CD4-positive, alpha-beta T cell (primary cell): ENCODE measurements at regions of chr15 and their contacts with region 1.

Region 1: GRCh38 chr15:89888214-89888804 is 5.5 kb downstream of the AP3S2 start:
- DNase-seq: no peak
- ATAC-seq: no peak
- H3K4me3 ChIP-seq: no peak overlapping the region
- H3K4me3 Mint-ChIP-seq: no peak overlapping the region
- H3K27ac ChIP-seq: no peak overlapping the region
- H3K27ac Mint-ChIP-seq: no peak overlapping the region
- H3K4me1 ChIP-seq: peaks cover 19% of the 10 kb centered on the region
- H3K4me1 Mint-ChIP-seq: peaks cover 31% of the 10 kb centered on the region
- H3K27me3 ChIP-seq: no peaks in the 10 kb centered on the region
- H3K27me3 Mint-ChIP-seq: no peaks in the 10 kb centered on the region
- CTCF ChIP-seq: no peak

Region 2: GRCh38 chr15:89768060-89768500 is 120.2 kb before region 1 on chr15:
- CTCF ChIA-PET with region 1: no interaction called
- POLR2A ChIA-PET with region 1: no interaction called
- intact Hi-C with region 1: no loop called
- DNase-seq: no peak
- ATAC-seq: no peak
- H3K4me3 ChIP-seq: no peak overlapping the region
- H3K4me3 Mint-ChIP-seq: no peak overlapping the region
- H3K27ac ChIP-seq: no peak overlapping the region
- H3K27ac Mint-ChIP-seq: no peak overlapping the region
- H3K4me1 ChIP-seq: no peaks in the 10 kb centered on the region
- H3K4me1 Mint-ChIP-seq: no peaks in the 10 kb centered on the region
- H3K27me3 ChIP-seq: no peaks in the 10 kb centered on the region
- H3K27me3 Mint-ChIP-seq: no peaks in the 10 kb centered on the region
- CTCF ChIP-seq: no peak

Region 3: DNA sequence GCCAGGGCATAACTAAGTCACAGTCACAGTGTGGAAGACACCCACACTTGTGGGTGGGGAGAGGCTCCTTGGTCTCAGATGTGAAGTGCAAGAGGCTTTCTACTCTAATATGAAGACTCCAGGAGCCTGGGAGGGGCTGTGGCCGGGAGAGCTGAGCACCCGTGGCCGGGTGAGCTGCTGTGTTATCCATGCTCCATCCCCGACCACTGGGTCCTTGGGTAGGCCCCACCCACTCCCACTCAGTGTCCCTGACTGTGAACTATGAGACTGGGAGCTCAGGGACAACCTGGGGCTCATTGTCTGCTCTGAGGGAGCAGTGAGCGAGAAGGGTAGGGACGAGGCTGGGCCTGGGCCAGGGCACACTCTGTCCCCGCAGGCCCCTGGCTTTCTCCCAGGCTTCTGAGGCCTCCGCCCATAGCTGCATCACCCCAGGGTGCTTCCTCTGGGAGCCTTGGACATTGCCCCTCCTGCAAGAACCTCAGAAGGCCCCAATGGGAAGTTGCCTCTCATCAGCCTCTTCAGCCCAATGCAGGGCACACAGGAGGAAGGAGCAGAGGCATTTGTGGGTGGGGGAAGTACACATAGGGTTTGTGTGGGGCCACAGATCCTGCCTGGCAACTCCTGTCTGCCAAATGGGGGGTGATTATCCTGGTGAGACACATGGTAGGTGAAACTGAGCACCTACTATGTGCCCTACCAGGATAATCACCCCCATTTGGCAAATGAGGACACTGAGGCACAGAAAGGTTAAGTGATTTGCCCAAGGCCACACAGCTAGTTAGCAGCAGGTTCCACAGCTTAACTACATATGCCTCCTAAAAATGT is 76.1 kb before region 1 on chr15:
- CTCF ChIA-PET with region 1: no interaction called
- POLR2A ChIA-PET with region 1: no interaction called
- intact Hi-C with region 1: no loop called
- DNase-seq: peak in 2 of 14 experiments; percentile 26 to 48
- ATAC-seq: no peak
- H3K4me3 ChIP-seq: no peak overlapping the region
- H3K4me3 Mint-ChIP-seq: no peak overlapping the region
- H3K27ac ChIP-seq: no peak overlapping the region
- H3K27ac Mint-ChIP-seq: no peak overlapping the region
- H3K4me1 ChIP-seq: peaks cover 12% of the 10 kb centered on the region
- H3K4me1 Mint-ChIP-seq: peaks cover 5% of the 10 kb centered on the region
- H3K27me3 ChIP-seq: peaks cover 33 to 43% of the 10 kb centered on the region in 2 experiments
- H3K27me3 Mint-ChIP-seq: peaks cover 42% of the 10 kb centered on the region
- CTCF ChIP-seq: no peak

Region 4: DNA sequence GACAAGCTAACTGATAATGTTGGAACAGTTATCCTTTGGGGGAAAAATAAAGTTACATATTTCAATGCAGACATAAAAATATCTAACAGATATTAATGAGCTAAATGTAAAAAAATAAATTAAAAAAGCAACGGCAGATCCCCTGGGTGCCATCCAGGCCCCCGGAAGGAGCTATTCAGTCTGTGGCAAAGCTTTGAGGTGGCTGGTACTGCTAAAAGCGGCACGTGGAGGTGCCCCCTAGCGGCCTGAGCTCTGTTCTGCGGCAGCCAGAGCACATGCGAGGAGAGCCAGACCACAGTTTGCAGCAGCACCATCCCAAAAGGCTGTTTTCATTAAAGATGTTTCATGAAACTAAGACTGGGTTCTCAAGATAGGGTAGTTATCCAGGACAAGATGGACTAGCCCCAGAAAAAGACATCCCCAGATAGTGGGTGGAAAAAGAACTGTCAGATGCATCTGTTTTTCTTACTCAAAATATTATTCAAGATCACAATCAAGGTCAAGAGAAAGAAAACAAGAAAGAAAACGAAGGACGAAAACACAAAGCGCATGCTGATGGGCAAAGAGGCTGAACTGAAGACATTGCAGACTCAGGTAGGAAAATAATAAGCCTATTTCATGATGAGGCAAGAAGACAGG is 13.3 kb before region 1 on chr15:
- CTCF ChIA-PET with region 1: interaction called, 11 read pairs
- POLR2A ChIA-PET with region 1: interaction called, 16 read pairs
- intact Hi-C with region 1: no loop called
- DNase-seq: peak; percentile 67 to 88 (median 77)
- ATAC-seq: peak; percentile 100
- H3K4me3 ChIP-seq: no peak overlapping the region
- H3K4me3 Mint-ChIP-seq: no peak overlapping the region
- H3K27ac ChIP-seq: no peak overlapping the region
- H3K27ac Mint-ChIP-seq: no peak overlapping the region
- H3K4me1 ChIP-seq: peaks cover 5% of the 10 kb centered on the region
- H3K4me1 Mint-ChIP-seq: peaks cover 7% of the 10 kb centered on the region
- H3K27me3 ChIP-seq: no peaks in the 10 kb centered on the region
- H3K27me3 Mint-ChIP-seq: no peaks in the 10 kb centered on the region
- CTCF ChIP-seq: peak; percentile 98

Region 5: GRCh38 chr15:89928428-89929197 is 40.3 kb after region 1 on chr15:
- CTCF ChIA-PET with region 1: no interaction called
- POLR2A ChIA-PET with region 1: no interaction called
- intact Hi-C with region 1: no loop called
- DNase-seq: no peak
- ATAC-seq: no peak
- H3K4me3 ChIP-seq: no peak overlapping the region
- H3K4me3 Mint-ChIP-seq: no peak overlapping the region
- H3K27ac ChIP-seq: no peak overlapping the region
- H3K27ac Mint-ChIP-seq: no peak overlapping the region
- H3K4me1 ChIP-seq: no peaks in the 10 kb centered on the region
- H3K4me1 Mint-ChIP-seq: no peaks in the 10 kb centered on the region
- H3K27me3 ChIP-seq: no peaks in the 10 kb centered on the region
- H3K27me3 Mint-ChIP-seq: no peaks in the 10 kb centered on the region
- CTCF ChIP-seq: no peak